ENCODE measurements at regions of chr10 and their contacts with region 1.

Region 1: GRCh38 chr10:3197348-3198003 is 24.9 kb upstream of the PITRM1 start:
- DNase-seq: peak in 34 of 35 experiments; percentile 18 to 71 (median 48)
- ATAC-seq: peak; percentile 71 to 79 (median 74)
- H3K4me3 ChIP-seq: peak overlapping the region; percentile 25 to 41
- H3K4me3 Mint-ChIP-seq: peak overlapping the region; percentile 57 to 75 (median 71)
- H3K27ac ChIP-seq: no peak overlapping the region
- H3K27ac Mint-ChIP-seq: no peak overlapping the region
- H3K4me1 ChIP-seq: peaks cover 3 to 25% of the 10 kb centered on the region in 2 experiments
- H3K4me1 Mint-ChIP-seq: peaks cover 13 to 19% (median 19%) of the 10 kb centered on the region in 3 donors
- H3K27me3 ChIP-seq: peaks cover 0 to 56% of the 10 kb centered on the region in 2 experiments
- H3K27me3 Mint-ChIP-seq: peaks cover 36 to 41% of the 10 kb centered on the region in 2 donors

Region 2: GRCh38 chr10:4767033-4767814 is 1569.7 kb after region 1 on chr10:
- CTCF ChIA-PET with region 1: interaction called, 3 to 17 read pairs
- POLR2A ChIA-PET with region 1: interaction called in 1 of 2 experiments, 3 read pairs
- DNase-seq: peak in 5 of 35 experiments; percentile 1 to 51 (median 3)
- ATAC-seq: no peak
- H3K4me3 ChIP-seq: no peak overlapping the region
- H3K4me3 Mint-ChIP-seq: no peak overlapping the region
- H3K27ac ChIP-seq: no peak overlapping the region
- H3K27ac Mint-ChIP-seq: no peak overlapping the region
- H3K4me1 ChIP-seq: no peaks in the 10 kb centered on the region
- H3K4me1 Mint-ChIP-seq: no peaks in the 10 kb centered on the region
- H3K27me3 ChIP-seq: no peaks in the 10 kb centered on the region
- H3K27me3 Mint-ChIP-seq: peaks cover 17 to 33% of the 10 kb centered on the region in 2 donors

Measured in T-cell (primary cell).